Left ventricle myocardium superior (tissue), 1 donor: ENCODE measurements at regions of chr3 and their contacts with region 1.

Region 1: GRCh38 chr3:45210308-45211041 is 15.6 kb downstream of the TMEM158 start:
- DNase-seq: peak; percentile 90
- ATAC-seq: peak; percentile 98

Region 2: DNA sequence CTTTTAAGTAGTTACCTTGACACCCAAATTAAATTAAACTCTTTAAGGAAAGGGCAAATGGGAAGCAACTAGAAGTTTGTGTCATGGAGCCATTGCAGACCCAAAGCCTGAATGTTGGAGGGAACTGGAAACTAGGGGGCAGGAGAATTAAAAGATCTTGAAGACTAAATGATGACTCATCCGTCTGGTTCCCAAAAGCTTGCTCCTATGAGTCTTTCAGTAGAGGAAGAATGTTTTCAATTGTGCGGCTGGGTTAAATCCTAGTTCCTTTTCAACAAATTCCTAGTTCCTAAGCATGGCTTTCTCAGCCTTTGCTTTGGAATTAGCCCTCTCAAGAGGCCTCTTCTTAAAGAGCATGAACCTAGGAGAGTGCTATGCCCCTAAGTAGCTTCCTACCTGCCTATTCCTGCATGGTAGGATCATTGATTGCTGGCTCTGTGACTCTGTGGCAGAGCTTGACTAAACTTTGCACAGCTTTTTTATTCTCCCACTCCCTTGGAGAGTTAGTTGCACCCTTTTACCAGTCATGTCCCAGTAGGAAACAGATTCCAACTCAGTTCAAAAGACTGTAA is 166.7 kb before region 1 on chr3:
- intact Hi-C with region 1: loop called (anchors 5 kb)
- DNase-seq: no peak
- ATAC-seq: peak; percentile 18